ENCODE measurements at regions of chr12 and their contacts with region 1.

Region 1: GRCh38 chr12:3752741-3753486 is at the start of gene CRACR2A:
- DNase-seq: peak; percentile 70 to 92 (median 79)
- ATAC-seq: peak; percentile 78
- H3K4me3 ChIP-seq: peak within 1 kb of the TSS; percentile 92
- H3K4me3 Mint-ChIP-seq: peak within 1 kb of the TSS; percentile 89
- H3K27ac ChIP-seq: peak within 1 kb of the TSS; percentile 92 to 95
- H3K27ac Mint-ChIP-seq: peak within 1 kb of the TSS; percentile 92
- H3K4me1 ChIP-seq: peaks cover 68% of the 10 kb centered on the region
- H3K4me1 Mint-ChIP-seq: peaks cover 71% of the 10 kb centered on the region
- H3K27me3 ChIP-seq: no peaks in the 10 kb centered on the region
- H3K27me3 Mint-ChIP-seq: no peaks in the 10 kb centered on the region
- CTCF ChIP-seq: peak; percentile 80
- total RNA-seq, gene CRACR2A: 23.5 to 27.5 TPM

Region 2: DNA sequence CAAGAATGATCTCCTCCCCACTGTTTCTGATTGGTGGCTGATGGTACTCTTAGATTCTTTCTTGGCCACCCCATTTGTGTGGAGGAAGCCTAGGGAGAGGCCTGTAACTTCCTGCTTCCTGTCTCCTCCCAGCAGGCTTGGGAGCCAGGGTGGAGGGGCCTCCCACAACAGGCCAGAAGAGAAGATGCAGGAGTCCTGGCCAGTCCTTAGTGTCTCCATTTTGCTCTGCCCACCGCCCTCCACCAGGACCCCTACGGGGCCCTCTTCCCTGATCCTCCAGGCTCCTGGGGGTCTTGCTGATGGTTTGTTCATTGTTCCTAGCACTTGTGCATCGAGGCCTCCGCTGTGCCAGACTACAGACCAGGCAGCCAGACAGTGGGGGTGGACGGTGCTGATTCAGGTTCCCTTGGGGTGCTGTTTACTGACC is 669.0 kb before region 1 on chr12:
- CTCF ChIA-PET with region 1: no interaction called
- POLR2A ChIA-PET with region 1: no interaction called
- intact Hi-C with region 1: loop called in 1 of 2 experiments (anchors 10 kb)
- DNase-seq: no peak
- ATAC-seq: no peak
- H3K4me3 ChIP-seq: no peak overlapping the region
- H3K4me3 Mint-ChIP-seq: no peak overlapping the region
- H3K27ac ChIP-seq: no peak overlapping the region
- H3K27ac Mint-ChIP-seq: no peak overlapping the region
- H3K4me1 ChIP-seq: peaks cover 6% of the 10 kb centered on the region
- H3K4me1 Mint-ChIP-seq: no peaks in the 10 kb centered on the region
- H3K27me3 ChIP-seq: no peaks in the 10 kb centered on the region
- H3K27me3 Mint-ChIP-seq: no peaks in the 10 kb centered on the region
- CTCF ChIP-seq: no peak

Region 3: DNA sequence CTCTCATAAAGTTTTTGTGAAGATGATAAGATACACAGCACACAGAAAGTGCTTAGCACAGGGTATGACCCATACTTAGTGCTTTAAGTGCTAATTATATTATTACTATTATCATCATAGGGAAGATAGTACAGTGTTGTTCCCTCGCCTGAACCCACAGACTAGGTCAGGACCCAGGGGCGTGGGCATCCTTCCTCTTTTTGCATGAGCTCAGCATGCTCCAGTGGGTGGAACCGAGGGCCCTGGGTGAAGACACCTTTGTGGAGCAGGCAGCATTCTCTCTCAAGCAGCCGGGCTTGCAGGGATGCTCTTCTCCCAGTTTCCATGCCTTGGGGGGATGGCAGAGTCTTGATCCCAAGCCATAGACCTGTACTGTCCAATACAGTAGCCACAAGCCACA is 34.8 kb before region 1 on chr12:
- CTCF ChIA-PET with region 1: interaction called, 6 read pairs
- POLR2A ChIA-PET with region 1: no interaction called
- intact Hi-C with region 1: loop called in 1 of 2 experiments (anchors 5 kb)
- DNase-seq: peak in 2 of 14 experiments; percentile 24
- ATAC-seq: no peak
- H3K4me3 ChIP-seq: no peak overlapping the region
- H3K4me3 Mint-ChIP-seq: no peak overlapping the region
- H3K27ac ChIP-seq: no peak overlapping the region
- H3K27ac Mint-ChIP-seq: no peak overlapping the region
- H3K4me1 ChIP-seq: no peaks in the 10 kb centered on the region
- H3K4me1 Mint-ChIP-seq: peaks cover 33% of the 10 kb centered on the region
- H3K27me3 ChIP-seq: no peaks in the 10 kb centered on the region
- H3K27me3 Mint-ChIP-seq: no peaks in the 10 kb centered on the region
- CTCF ChIP-seq: no peak

Region 4: DNA sequence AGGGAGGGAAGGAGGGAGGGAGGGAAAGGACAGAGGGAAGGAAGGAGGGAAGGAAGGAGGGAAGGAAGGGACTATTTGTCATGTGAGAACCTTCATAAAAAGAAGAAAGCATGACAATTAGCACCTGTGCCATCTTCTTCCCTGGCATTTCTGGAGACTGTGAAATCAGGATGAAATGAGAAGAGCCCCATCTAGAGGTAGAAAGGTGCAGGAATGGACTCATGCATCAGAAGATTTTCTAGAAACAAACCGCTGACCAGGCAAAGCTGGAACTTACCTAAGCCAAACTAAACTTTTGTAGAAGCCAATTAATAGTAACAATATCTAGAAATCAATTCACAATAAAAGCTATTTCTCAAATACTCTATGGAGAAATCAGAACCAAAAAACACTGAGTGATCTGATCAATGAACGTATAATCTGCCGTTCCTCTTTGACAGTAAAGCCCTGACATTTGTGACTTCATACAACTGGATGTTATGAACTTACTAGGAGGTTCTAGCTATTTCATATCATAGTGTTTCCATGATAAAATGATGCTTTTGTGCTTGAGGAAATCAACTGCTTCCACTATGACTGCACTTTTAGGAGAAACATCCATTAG is 24.4 kb after region 1 on chr12:
- CTCF ChIA-PET with region 1: no interaction called
- POLR2A ChIA-PET with region 1: no interaction called
- intact Hi-C with region 1: no loop called
- DNase-seq: peak in 4 of 14 experiments; percentile 12 to 67 (median 58)
- ATAC-seq: peak; percentile 63
- H3K4me3 ChIP-seq: no peak overlapping the region
- H3K4me3 Mint-ChIP-seq: no peak overlapping the region
- H3K27ac ChIP-seq: no peak overlapping the region
- H3K27ac Mint-ChIP-seq: no peak overlapping the region
- H3K4me1 ChIP-seq: peaks cover 2% of the 10 kb centered on the region
- H3K4me1 Mint-ChIP-seq: peaks cover 5% of the 10 kb centered on the region
- H3K27me3 ChIP-seq: no peaks in the 10 kb centered on the region
- H3K27me3 Mint-ChIP-seq: no peaks in the 10 kb centered on the region
- CTCF ChIP-seq: peak; percentile 75

Region 5: GRCh38 chr12:3791256-3792252 is 38.6 kb after region 1 on chr12:
- CTCF ChIA-PET with region 1: no interaction called
- POLR2A ChIA-PET with region 1: no interaction called
- intact Hi-C with region 1: no loop called
- DNase-seq: no peak
- ATAC-seq: no peak
- H3K4me3 ChIP-seq: no peak overlapping the region
- H3K4me3 Mint-ChIP-seq: no peak overlapping the region
- H3K27ac ChIP-seq: no peak overlapping the region
- H3K27ac Mint-ChIP-seq: no peak overlapping the region
- H3K4me1 ChIP-seq: no peaks in the 10 kb centered on the region
- H3K4me1 Mint-ChIP-seq: no peaks in the 10 kb centered on the region
- H3K27me3 ChIP-seq: no peaks in the 10 kb centered on the region
- H3K27me3 Mint-ChIP-seq: no peaks in the 10 kb centered on the region
- CTCF ChIP-seq: no peak

Region 6: GRCh38 chr12:4320853-4321701 is 568.2 kb after region 1 on chr12 and contains the start of gene TIGAR:
- CTCF ChIA-PET with region 1: no interaction called
- POLR2A ChIA-PET with region 1: no interaction called
- intact Hi-C with region 1: loop called in 1 of 2 experiments (anchors 10 kb)
- DNase-seq: peak; percentile 75 to 97 (median 86)
- ATAC-seq: peak; percentile 94
- H3K4me3 ChIP-seq: peak within 1 kb of the TSS; percentile 85
- H3K4me3 Mint-ChIP-seq: peak within 1 kb of the TSS; percentile 84
- H3K27ac ChIP-seq: peak within 1 kb of the TSS; percentile 80 to 86
- H3K27ac Mint-ChIP-seq: peak within 1 kb of the TSS; percentile 84
- H3K4me1 ChIP-seq: peaks cover 26% of the 10 kb centered on the region
- H3K4me1 Mint-ChIP-seq: peaks cover 44% of the 10 kb centered on the region
- H3K27me3 ChIP-seq: no peaks in the 10 kb centered on the region
- H3K27me3 Mint-ChIP-seq: no peaks in the 10 kb centered on the region
- CTCF ChIP-seq: no peak
- total RNA-seq, gene TIGAR: 5.3 to 7.1 TPM

Measured in CD4-positive, alpha-beta T cell (primary cell).